Heart right ventricle (tissue), 16 donors: ENCODE measurements at regions of chr15 and their contacts with region 1.

Region 1: DNA sequence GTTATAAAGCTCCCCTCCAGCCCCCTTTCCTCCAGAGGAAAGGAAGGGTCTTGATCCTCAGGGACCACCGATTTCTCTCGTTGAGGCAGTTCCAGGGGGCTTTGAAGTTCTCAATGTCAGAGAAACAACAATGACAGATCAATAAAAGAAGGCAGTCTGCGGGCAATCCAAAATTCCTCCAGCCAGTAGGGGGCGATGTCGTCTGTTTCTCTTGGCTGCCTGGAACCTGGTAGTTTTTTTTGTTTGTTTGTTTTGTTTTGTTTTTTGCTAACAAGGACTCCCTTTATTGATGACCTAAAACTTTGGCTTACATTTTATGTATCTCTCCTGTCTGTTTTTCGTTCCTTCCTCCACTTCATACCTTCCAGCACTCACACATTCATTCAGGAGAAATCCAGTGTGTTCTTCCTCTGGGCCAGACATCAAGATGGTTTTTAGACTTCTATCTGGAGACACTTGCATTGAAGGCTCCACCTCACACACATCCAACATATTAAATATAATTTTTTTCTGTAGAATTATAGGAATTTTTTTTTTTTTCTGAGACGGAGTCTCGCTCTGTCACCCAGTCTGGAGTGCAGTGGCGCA is 276.6 kb downstream of the RPLP1 start:
- DNase-seq: peak in 1 of 2 donors; percentile 17
- ATAC-seq: no peak
- H3K4me3 ChIP-seq: no peak overlapping the region
- H3K27ac ChIP-seq: no peak overlapping the region
- H3K4me1 ChIP-seq: peaks cover 0 to 44% (median 0%) of the 10 kb centered on the region in 9 donors
- H3K27me3 ChIP-seq: peaks cover 0 to 32% (median 9%) of the 10 kb centered on the region in 7 donors
- CTCF ChIP-seq: peak; percentile 64 to 84 (median 73)

Region 2: DNA sequence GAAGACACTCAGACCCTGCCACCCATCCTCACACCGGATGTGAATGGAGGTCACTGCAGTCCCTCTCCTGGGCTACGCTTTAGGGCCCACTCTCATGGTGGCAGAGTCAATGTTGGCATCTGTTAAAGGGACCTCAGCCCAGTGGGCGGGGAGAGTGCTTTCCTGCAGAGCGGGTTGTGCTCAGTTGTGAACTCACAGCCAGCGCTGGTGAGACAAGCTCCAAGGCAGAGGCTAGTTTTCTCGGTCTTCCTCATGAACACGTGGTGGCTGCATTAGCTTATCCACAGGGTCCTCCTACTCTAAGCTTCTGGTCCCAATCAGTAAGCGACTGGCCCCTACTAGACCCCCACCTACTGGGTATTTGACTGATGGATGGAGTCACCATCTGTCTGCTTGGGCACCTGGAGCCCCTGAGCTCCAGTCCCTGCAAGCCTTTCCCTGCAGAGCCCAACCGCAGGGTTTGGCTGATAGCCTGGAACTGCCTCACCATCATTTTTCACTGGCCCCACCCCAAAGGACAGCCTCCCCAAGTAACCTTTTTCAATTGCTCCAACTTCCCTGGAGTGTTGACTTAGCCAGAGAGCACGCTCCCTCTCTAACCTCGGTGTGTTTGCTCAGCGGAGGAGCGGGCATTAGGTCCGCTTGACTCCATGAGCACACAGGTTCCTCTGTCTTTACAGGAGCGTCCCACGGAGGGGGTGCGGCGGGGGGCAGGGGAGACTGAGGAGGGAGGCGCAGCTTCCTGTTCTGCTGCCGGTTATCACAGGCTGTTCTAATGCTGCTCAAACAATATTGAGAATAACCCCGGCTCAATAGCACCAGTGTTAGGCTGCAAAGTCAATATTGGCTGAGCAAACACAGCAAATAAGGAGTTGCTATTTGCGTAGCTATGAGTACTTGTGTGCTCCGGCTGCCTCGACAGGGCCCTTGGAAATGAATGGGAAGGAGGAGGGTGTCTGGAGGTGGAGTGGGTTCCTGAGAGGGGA is 135.0 kb before region 1 on chr15:
- intact Hi-C with region 1: loop called in 1 of 10 experiments (anchors 10 kb)
- DNase-seq: peak; percentile 43 to 49
- ATAC-seq: peak; percentile 32 to 70 (median 55)
- H3K4me3 ChIP-seq: no peak overlapping the region
- H3K27ac ChIP-seq: peak overlapping the region; percentile 72 to 93 (median 81)
- H3K4me1 ChIP-seq: peaks cover 18 to 35% (median 28%) of the 10 kb centered on the region in 9 donors
- H3K27me3 ChIP-seq: peaks cover 0 to 10% (median 0%) of the 10 kb centered on the region in 7 donors
- CTCF ChIP-seq: no peak